Activated CD4-positive, alpha-beta memory T cell treated with anti-CD3 and anti-CD28 coated beads for 36 hours (primary cell): ENCODE measurements at regions of chr13 and their contacts with region 1.

Region 1: DNA sequence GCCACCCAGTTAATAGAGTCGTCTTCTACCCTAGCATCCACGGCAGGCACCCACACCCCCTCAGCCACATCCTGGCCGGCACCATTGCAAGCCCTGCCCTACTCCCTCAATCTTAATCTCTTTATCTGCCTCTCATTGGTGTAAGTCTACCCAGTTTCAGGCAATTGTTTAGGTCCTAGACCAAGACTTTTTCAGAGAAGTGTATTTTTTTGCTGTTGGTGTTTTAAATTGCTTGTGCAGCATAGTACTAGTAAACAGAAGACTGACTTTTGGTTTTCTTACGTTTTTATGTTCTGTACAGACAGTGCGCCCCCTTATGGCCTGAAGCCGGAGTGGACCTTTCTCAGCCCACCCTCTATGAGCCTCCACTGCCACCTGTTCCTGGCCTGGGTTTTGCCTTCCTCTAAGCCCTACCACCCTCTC is 2.3 kb upstream of the LCP1 start:
- DNase-seq: peak; percentile 87
- H3K4me3 Mint-ChIP-seq: peak overlapping the region; percentile 97
- H3K27ac Mint-ChIP-seq: peak overlapping the region; percentile 96
- H3K4me1 Mint-ChIP-seq: peaks cover 35% of the 10 kb centered on the region
- H3K27me3 Mint-ChIP-seq: no peaks in the 10 kb centered on the region

Region 2: GRCh38 chr13:45417790-45418534 is 766.3 kb before region 1 on chr13 and contains the start of gene SLC25A30:
- CTCF ChIA-PET with region 1: no interaction called
- POLR2A ChIA-PET with region 1: no interaction called
- intact Hi-C with region 1: loop called (anchors 5 kb)
- DNase-seq: peak; percentile 93
- H3K4me3 Mint-ChIP-seq: peak within 1 kb of the TSS; percentile 84
- H3K27ac Mint-ChIP-seq: peak within 1 kb of the TSS; percentile 88
- H3K4me1 Mint-ChIP-seq: peaks cover 16% of the 10 kb centered on the region
- H3K27me3 Mint-ChIP-seq: no peaks in the 10 kb centered on the region
- total RNA-seq, gene SLC25A30: 14.6 to 15.3 TPM

Region 3: GRCh38 chr13:46052319-46053161 is 131.7 kb before region 1 on chr13 and contains the start of gene ZC3H13:
- CTCF ChIA-PET with region 1: interaction called, 3 read pairs
- POLR2A ChIA-PET with region 1: interaction called, 3 read pairs
- intact Hi-C with region 1: loop called (anchors 1 kb)
- DNase-seq: peak; percentile 96
- H3K4me3 Mint-ChIP-seq: peak within 1 kb of the TSS; percentile 90
- H3K27ac Mint-ChIP-seq: peak within 1 kb of the TSS; percentile 93
- H3K4me1 Mint-ChIP-seq: peaks cover 28% of the 10 kb centered on the region
- H3K27me3 Mint-ChIP-seq: peaks cover 8% of the 10 kb centered on the region
- total RNA-seq, gene ZC3H13: 37.0 to 47.3 TPM

Region 4: DNA sequence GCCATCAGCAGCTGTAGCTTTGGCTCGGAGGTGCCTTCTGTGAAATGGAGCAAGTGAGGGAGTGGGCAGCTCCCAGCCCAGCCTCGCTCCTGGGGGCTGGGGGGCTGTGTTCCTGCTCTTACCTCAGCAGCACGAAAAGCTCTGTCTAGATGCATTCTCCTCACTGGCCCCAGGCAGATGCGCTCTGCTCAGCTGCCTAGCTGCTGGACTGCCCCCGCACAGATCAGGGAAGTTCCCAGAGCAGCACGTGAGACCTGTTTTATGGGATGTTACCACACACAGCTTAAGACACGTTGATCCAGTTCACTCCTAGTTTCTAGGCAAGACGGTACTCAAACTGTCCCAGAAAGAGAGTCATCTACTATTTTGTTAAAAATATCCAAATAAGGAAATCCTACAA is 15.9 kb before region 1 on chr13:
- CTCF ChIA-PET with region 1: interaction called, 81 read pairs
- POLR2A ChIA-PET with region 1: interaction called, 239 read pairs
- intact Hi-C with region 1: loop called (anchors 1 kb)
- DNase-seq: peak; percentile 83
- H3K4me3 Mint-ChIP-seq: peak overlapping the region; percentile 69
- H3K27ac Mint-ChIP-seq: peak overlapping the region; percentile 86
- H3K4me1 Mint-ChIP-seq: peaks cover 95% of the 10 kb centered on the region
- H3K27me3 Mint-ChIP-seq: no peaks in the 10 kb centered on the region

Region 5: GRCh38 chr13:46211483-46212351 is 27.4 kb after region 1 on chr13 and contains the start of gene LRRC63:
- CTCF ChIA-PET with region 1: interaction called, 4 read pairs
- POLR2A ChIA-PET with region 1: interaction called, 3 read pairs
- intact Hi-C with region 1: loop called (anchors 1 kb)
- DNase-seq: peak; percentile 89
- H3K4me3 Mint-ChIP-seq: peak within 1 kb of the TSS; percentile 85
- H3K27ac Mint-ChIP-seq: peak within 1 kb of the TSS; percentile 74
- H3K4me1 Mint-ChIP-seq: peaks cover 21% of the 10 kb centered on the region
- H3K27me3 Mint-ChIP-seq: no peaks in the 10 kb centered on the region
- total RNA-seq, gene LRRC63: 0.45 to 0.63 TPM